ENCODE measurements at regions of chr10 and their contacts with region 1.

Region 1: DNA sequence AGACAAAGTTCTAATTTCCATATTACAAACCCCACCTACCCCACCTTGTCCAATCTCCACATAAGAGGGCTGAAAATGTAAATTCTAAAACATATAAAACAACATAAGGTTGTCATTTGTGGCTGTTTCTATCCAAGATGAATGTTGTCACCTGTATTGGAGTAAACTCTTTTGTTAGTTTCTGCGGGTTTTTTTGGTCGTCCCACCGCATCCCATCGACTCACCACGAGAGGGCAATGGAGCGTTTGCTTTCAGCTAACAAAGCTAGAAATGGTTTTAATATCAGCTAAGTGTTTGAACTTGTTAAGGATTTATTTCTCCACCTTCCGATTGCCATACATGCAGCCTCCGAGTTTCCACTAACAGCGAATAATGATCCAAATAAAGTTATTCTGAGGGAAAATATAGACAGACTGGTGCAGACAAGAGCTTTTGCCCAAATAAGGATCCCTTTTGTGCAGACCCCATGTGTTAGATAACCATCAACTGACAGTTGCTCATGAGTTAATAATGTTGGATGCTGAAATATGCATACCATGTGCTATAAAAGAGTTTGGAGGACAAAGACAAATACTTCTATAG is 137.2 kb downstream of the ARID5B start:
- DNase-seq: peak; percentile 71
- H3K4me3 ChIP-seq: no peak overlapping the region
- H3K27ac ChIP-seq: peak overlapping the region; percentile 93
- H3K4me1 ChIP-seq: peaks cover 43% of the 10 kb centered on the region
- H3K27me3 ChIP-seq: no peaks in the 10 kb centered on the region
- CTCF ChIP-seq: peak; percentile 85 to 86

Region 2: DNA sequence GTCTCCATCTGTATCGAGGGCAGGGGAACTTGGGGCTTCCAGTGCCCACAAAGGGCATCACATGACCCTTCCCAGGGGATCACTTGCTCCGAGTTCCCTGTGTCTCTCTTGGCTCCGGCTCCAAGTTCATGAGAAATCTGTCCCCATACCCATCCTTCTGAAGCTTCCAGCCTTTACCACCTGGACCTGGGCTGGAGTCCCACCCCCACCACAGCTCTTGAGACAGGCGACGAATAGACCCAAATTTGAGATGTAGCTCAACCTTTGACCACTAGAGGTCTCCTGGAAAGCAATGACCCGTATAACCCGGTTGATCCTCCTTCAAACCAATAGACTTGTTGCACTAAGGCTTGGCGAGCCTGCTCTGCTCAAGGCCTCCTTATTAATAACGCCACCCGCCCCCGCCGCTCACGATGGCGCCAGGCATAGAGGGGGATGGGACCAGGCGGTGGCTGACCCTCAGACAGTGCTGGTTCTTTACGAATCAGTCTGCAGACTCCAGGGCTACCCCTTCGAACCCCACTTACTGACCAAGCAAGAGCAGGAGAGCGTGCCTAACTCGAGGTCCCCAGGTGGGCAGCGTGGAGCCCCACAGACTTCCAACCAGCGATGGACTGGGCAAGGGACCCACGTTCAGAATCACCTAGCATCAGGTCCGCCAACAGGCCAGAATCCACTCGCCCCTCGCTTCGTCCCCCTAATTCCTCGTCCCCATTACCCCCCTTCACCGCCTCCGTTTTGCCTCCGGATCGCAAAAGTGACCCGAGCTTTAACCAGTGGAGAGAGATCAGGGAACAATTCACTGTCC is 141.6 kb before region 1 on chr10:
- CTCF ChIA-PET with region 1: no interaction called
- dilution Hi-C with region 1: no loop called
- in situ Hi-C with region 1: no loop called
- intact Hi-C with region 1: loop called (anchors 1 kb)
- DNase-seq: no peak
- H3K4me3 ChIP-seq: peak overlapping the region in 1 of 3 experiments; percentile 15
- H3K27ac ChIP-seq: peak overlapping the region; percentile 30
- H3K4me1 ChIP-seq: peaks cover 34% of the 10 kb centered on the region
- H3K27me3 ChIP-seq: no peaks in the 10 kb centered on the region
- CTCF ChIP-seq: peak; percentile 71 to 75

Region 3: GRCh38 chr10:62076891-62077290 is 38.2 kb after region 1 on chr10:
- CTCF ChIA-PET with region 1: interaction called, 3 read pairs
- dilution Hi-C with region 1: no loop called
- in situ Hi-C with region 1: no loop called
- intact Hi-C with region 1: loop called (anchors 2 kb)
- DNase-seq: peak; percentile 89
- H3K4me3 ChIP-seq: no peak overlapping the region
- H3K27ac ChIP-seq: peak overlapping the region; percentile 64
- H3K4me1 ChIP-seq: peaks cover 28% of the 10 kb centered on the region
- H3K27me3 ChIP-seq: no peaks in the 10 kb centered on the region
- CTCF ChIP-seq: no peak

Region 4: DNA sequence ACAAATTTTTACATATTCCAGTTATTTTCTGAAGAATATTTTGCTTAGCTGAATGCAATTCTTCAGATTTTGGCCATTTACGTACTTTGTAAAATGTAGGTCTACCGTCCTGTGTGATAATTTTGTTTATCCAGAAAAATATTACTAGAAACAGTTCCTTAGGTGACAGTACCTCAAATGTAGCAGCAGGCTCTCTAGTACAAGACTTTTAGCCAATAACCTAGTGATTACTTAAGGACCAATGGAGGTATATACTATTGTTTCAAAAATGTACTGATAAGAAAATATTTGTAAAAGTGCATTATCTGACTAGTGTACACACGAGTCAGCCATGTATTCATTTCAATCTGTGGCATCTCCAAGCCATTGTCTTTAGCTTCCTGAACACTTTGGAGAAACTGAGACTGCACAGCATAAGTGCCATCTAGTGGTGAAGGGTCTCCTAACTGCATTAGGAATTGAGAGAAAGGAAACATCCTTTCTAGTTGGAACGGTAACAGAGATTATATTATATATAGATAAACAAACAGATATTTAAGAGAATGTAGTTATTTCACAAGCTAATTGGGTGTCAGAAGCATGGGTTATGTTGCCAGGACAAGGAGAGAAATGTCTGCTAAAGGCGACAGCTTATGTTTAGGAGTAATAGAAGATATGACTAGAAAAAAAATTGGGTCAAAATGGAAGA is 206.2 kb after region 1 on chr10:
- CTCF ChIA-PET with region 1: interaction called, 22 read pairs
- dilution Hi-C with region 1: no loop called
- in situ Hi-C with region 1: no loop called
- intact Hi-C with region 1: loop called (anchors 1 kb)
- DNase-seq: peak; percentile 70
- H3K4me3 ChIP-seq: peak overlapping the region in 2 of 3 experiments; percentile 14 to 69
- H3K27ac ChIP-seq: peak overlapping the region; percentile 84
- H3K4me1 ChIP-seq: peaks cover 18% of the 10 kb centered on the region
- H3K27me3 ChIP-seq: no peaks in the 10 kb centered on the region
- CTCF ChIP-seq: peak; percentile 85 to 96

Region 5: GRCh38 chr10:62582804-62583208 is 544.1 kb after region 1 on chr10:
- CTCF ChIA-PET with region 1: no interaction called
- dilution Hi-C with region 1: no loop called
- in situ Hi-C with region 1: no loop called
- intact Hi-C with region 1: loop called (anchors 10 kb)
- DNase-seq: peak; percentile 81
- H3K4me3 ChIP-seq: no peak overlapping the region
- H3K27ac ChIP-seq: peak overlapping the region; percentile 36
- H3K4me1 ChIP-seq: peaks cover 28% of the 10 kb centered on the region
- H3K27me3 ChIP-seq: no peaks in the 10 kb centered on the region
- CTCF ChIP-seq: no peak

Measured in mammary epithelial cell (primary cell).